Adrenal gland (tissue), 19 donors: ENCODE measurements at regions of chr17 and their contacts with region 1.

Region 1: DNA sequence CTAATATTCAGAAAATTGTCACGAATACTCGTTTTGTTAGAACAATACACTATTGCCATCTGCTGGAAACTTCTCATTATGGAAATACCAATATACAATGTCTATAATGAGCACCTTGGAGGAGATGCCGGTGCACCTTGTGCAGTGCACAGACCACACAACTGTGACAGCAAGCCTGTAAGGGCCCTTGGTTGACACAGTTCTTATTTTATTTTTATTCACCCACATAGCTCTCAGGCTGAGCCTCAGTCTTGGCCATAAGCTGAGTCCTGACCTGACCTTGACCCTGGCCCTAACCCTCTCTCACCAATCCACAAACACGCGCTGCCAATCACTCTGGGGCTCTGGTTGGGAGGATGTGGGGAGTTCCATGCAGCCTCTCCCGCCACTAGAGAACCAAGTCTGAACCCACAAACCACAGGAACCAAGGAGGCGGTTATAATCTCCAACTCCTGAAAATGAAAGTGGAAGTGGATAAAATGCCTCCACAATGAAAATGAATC is 7.6 kb downstream of the AIPL1 start:
- DNase-seq: no peak
- H3K4me3 ChIP-seq: no peak overlapping the region
- H3K27ac ChIP-seq: no peak overlapping the region
- H3K4me1 ChIP-seq: peaks cover 0 to 4% of the 10 kb centered on the region in 2 donors
- H3K27me3 ChIP-seq: no peaks in the 10 kb centered on the region
- CTCF ChIP-seq: no peak
- POLR2A ChIP-seq: no peak

Region 2: GRCh38 chr17:5584383-5585286 is 842.7 kb before region 1 on chr17 and contains the start of gene NLRP1:
- intact Hi-C with region 1: loop called in 1 of 2 experiments (anchors 5 kb)
- DNase-seq: peak; percentile 71 to 90 (median 77)
- H3K4me3 ChIP-seq: peak within 1 kb of the TSS in 2 of 4 donors; percentile 9 to 33
- H3K27ac ChIP-seq: peak within 1 kb of the TSS in 4 of 5 donors; percentile 17 to 78 (median 43)
- H3K4me1 ChIP-seq: peaks cover 0 to 7% of the 10 kb centered on the region in 2 donors
- H3K27me3 ChIP-seq: no peaks in the 10 kb centered on the region
- CTCF ChIP-seq: no peak
- POLR2A ChIP-seq: peak; percentile 38 to 43
- total RNA-seq, gene NLRP1: 6.1 to 74.2 (median 15.1) TPM

Region 3: GRCh38 chr17:6366221-6366666 is 61.1 kb before region 1 on chr17:
- intact Hi-C with region 1: no loop called
- DNase-seq: no peak
- H3K4me3 ChIP-seq: no peak overlapping the region
- H3K27ac ChIP-seq: no peak overlapping the region
- H3K4me1 ChIP-seq: no peaks in the 10 kb centered on the region
- H3K27me3 ChIP-seq: no peaks in the 10 kb centered on the region
- CTCF ChIP-seq: no peak
- POLR2A ChIP-seq: no peak

Region 4: GRCh38 chr17:6496116-6496481 is 68.8 kb after region 1 on chr17:
- intact Hi-C with region 1: no loop called
- DNase-seq: peak in 1 of 7 donors; percentile 31
- H3K4me3 ChIP-seq: no peak overlapping the region
- H3K27ac ChIP-seq: no peak overlapping the region
- H3K4me1 ChIP-seq: no peaks in the 10 kb centered on the region
- H3K27me3 ChIP-seq: no peaks in the 10 kb centered on the region
- CTCF ChIP-seq: no peak
- POLR2A ChIP-seq: no peak